Prostate gland (tissue), 2 donors: ENCODE measurements at regions of chr15 and their contacts with region 1.

Region 1: DNA sequence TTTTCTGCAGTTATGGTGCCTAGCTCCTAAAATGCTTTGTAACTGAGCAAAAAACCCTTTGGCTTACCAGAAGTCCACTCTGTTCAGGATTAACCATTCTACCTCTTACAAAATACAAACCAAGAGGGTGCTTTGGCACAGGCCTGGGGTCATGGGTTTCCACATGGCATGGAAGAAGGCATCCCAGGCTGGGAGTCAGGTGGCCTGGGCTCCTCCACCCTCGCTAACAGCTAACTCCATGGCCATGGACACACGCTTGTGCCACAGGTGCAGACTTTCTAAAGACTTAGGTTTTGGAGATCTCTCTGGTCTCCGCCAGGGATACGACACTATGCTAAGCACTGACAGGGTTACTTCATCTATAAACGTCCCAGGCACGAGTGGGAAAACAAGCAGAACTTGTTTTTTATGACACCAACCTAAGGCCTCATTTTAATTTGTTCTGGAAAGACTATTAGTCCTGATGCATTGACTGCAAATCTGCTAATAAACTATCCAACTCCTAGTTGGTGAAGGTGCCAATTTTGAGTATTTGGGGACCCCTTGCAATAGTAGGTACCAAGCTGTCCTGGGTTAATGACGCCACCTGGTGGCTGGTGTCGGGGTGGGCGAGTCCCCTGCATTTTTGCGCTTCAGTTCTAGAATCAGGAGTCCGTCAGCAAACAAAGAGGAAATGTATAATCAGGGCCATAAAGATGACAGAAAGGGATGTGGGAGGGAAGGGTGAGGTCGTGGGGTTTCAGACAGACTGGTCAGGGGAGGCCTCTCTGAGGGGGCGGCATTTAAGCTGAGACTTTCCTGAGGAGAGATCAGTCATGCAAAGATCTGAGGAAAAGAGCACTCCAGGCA is 10.3 kb upstream of the ALDH1A3 start:
- DNase-seq: no peak
- H3K4me3 ChIP-seq: no peak overlapping the region
- H3K27ac ChIP-seq: peak overlapping the region; percentile 44 to 67
- H3K4me1 ChIP-seq: no peaks in the 10 kb centered on the region
- H3K27me3 ChIP-seq: no peaks in the 10 kb centered on the region
- CTCF ChIP-seq: peak in 3 of 4 experiments; percentile 38 to 62 (median 45)
- POLR2A ChIP-seq: no peak

Region 2: GRCh38 chr15:100224206-100225185 is 644.9 kb before region 1 on chr15:
- intact Hi-C with region 1: no loop called
- DNase-seq: no peak
- H3K4me3 ChIP-seq: no peak overlapping the region
- H3K27ac ChIP-seq: no peak overlapping the region
- H3K4me1 ChIP-seq: no peaks in the 10 kb centered on the region
- H3K27me3 ChIP-seq: no peaks in the 10 kb centered on the region
- CTCF ChIP-seq: no peak
- POLR2A ChIP-seq: no peak

Region 3: DNA sequence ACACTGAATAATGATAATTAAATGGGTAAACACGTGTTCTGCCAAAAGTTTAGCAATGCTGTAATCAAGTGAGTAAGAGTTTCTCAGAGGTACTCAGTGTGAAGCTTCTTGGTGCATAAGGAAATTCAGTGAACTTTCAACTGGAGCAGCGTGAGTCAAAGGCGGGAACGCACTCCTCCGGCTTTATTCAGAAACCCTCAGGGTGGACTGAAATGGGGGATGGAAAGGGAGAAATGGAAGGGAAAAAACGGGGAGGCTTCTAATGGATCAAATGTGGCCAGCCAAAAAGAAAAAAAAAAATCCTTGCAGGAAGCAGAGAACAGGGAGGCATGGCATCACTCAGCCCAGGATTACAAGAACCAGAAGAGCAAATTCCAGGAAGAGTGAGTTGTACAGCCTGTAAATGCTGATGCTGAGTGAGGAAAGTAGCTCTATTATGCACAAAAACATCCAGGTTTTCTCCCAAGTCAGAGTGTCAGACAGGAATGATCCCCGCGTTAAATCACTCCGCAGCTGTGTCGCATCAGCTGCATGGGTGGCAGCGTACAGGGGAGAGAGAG is 181.7 kb before region 1 on chr15:
- intact Hi-C with region 1: loop called (anchors 10 kb)
- DNase-seq: no peak
- H3K4me3 ChIP-seq: no peak overlapping the region
- H3K27ac ChIP-seq: no peak overlapping the region
- H3K4me1 ChIP-seq: no peaks in the 10 kb centered on the region
- H3K27me3 ChIP-seq: no peaks in the 10 kb centered on the region
- CTCF ChIP-seq: no peak
- POLR2A ChIP-seq: no peak